Left cardiac atrium (tissue), 4 donors: ENCODE measurements at regions of chr6 and their contacts with region 1.

Region 1: GRCh38 chr6:150142670-150143515 is at the start of gene PPP1R14C:
- DNase-seq: peak; percentile 47
- ATAC-seq: peak; percentile 85 to 90
- total RNA-seq, gene PPP1R14C: 94.9 to 114 TPM

Region 2: GRCh38 chr6:150177952-150178520 is 35.1 kb after region 1 on chr6:
- intact Hi-C with region 1: loop called in 1 of 2 experiments (anchors 2 kb)
- DNase-seq: peak; percentile 43
- ATAC-seq: peak; percentile 43 to 67

Region 3: DNA sequence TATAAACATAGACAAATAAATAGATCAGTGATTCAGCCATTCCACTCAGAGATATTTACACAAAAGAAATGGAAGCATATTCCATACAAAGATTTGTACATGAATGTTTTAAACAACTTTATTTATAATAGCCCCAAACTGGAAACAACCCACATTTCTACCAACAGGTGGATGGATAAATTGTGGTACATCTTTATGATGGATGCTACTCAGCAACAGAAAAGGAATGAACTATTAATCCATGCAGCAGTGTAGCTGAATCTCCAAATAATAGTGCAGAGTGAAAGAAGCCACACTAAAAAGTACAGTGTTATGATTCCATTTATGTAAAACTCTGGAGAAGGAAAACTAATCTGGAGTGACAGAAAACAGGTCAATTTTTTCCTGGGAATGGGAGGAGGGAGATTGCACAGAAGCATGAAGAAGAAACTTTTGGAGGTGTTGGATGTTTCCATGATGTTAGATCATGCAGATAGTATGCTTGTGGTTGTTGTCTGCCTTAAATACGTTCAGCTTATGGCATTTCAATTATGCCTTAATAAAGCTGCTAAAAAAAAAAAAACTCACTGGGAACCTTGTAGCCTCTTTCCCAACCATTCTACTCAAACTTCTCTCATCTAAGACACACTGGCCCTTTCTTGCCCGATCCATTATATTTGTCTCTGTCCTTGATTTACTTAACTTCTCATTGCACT is 100.9 kb after region 1 on chr6:
- intact Hi-C with region 1: loop called in 1 of 2 experiments (anchors 5 kb)
- DNase-seq: no peak
- ATAC-seq: no peak

Region 4: DNA sequence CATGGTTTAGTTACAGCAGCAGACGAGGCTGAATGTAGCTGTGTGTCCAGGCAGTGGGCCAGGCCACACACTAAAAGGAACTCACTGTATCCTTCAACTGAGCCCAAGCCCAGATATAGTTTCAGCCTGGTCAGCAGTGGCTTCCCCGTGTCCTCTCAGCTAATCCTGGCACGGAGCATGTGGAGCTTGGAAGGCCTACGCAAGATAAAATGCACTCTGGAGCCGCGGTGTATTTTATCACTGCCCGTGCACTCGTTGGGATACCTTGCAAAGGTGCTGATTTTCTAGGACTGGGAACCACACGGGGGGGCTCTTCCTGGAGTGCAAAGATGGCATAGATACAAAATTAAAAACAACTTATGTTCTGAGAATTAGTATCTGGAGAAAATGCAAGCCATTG is 177.5 kb after region 1 on chr6:
- intact Hi-C with region 1: loop called in 1 of 2 experiments (anchors 5 kb)
- DNase-seq: peak; percentile 80
- ATAC-seq: peak; percentile 96 to 97

Region 5: GRCh38 chr6:150395398-150396009 is 252.6 kb after region 1 on chr6:
- intact Hi-C with region 1: no loop called
- DNase-seq: peak; percentile 35
- ATAC-seq: peak; percentile 44 to 83